CD4-positive, alpha-beta memory T cell (primary cell): ENCODE measurements at regions of chr21 and their contacts with region 1.

Region 1: DNA sequence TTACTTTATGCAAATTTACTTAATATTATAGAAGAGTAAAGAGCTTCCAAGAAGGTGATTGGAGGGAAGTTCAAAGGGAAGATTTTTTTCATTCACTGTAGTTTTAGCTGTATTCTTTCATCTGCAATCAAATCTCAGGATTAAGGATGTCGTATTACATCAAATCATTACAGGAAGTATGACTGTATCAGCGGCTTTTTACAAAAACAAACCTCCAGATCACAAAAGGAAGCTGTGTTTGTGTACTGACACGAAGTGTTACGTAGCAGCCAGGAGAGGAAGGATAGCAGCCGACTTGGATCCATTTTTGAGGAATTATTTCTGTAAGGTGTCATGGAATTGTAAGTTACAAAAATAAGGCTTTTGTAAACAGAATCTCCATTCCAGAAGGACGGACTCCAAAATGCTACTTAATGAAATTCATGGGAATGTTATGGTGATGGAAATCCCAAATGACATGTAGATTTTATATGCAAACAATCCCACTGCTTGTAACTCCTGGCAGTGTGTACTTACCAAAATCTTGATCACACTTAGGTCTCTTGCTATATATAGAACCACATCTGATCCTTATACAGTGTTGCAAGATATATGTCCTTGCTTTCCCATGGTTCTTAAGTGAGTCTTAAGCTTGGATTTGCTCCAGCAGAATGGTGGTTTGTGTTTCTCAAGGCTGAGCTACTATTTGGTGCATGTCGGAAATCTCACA is 49.8 kb downstream of the KCNJ15 start:
- DNase-seq: peak; percentile 27 to 65 (median 45)
- H3K4me3 ChIP-seq: no peak overlapping the region
- H3K4me3 Mint-ChIP-seq: peak overlapping the region in 3 of 8 donors; percentile 15 to 64 (median 48)
- H3K27ac ChIP-seq: no peak overlapping the region
- H3K27ac Mint-ChIP-seq: peak overlapping the region in 6 of 7 donors; percentile 34 to 89 (median 80)
- H3K4me1 ChIP-seq: peaks cover 5% of the 10 kb centered on the region
- H3K4me1 Mint-ChIP-seq: peaks cover 3 to 17% (median 8%) of the 10 kb centered on the region in 4 donors
- H3K27me3 ChIP-seq: no peaks in the 10 kb centered on the region
- H3K27me3 Mint-ChIP-seq: no peaks in the 10 kb centered on the region

Region 2: GRCh38 chr21:38323721-38324531 is 17.3 kb after region 1 on chr21:
- CTCF ChIA-PET with region 1: no interaction called
- POLR2A ChIA-PET with region 1: interaction called, 12 read pairs
- intact Hi-C with region 1: no loop called
- DNase-seq: peak in 4 of 5 donors; percentile 23 to 48 (median 36)
- H3K4me3 ChIP-seq: no peak overlapping the region
- H3K4me3 Mint-ChIP-seq: peak overlapping the region in 7 of 8 donors; percentile 1 to 55 (median 17)
- H3K27ac ChIP-seq: no peak overlapping the region
- H3K27ac Mint-ChIP-seq: peak overlapping the region; percentile 9 to 90 (median 69)
- H3K4me1 ChIP-seq: peaks cover 22% of the 10 kb centered on the region
- H3K4me1 Mint-ChIP-seq: peaks cover 12 to 16% (median 14%) of the 10 kb centered on the region in 4 donors
- H3K27me3 ChIP-seq: no peaks in the 10 kb centered on the region
- H3K27me3 Mint-ChIP-seq: peaks cover 0 to 2% of the 10 kb centered on the region in 2 donors

Region 3: DNA sequence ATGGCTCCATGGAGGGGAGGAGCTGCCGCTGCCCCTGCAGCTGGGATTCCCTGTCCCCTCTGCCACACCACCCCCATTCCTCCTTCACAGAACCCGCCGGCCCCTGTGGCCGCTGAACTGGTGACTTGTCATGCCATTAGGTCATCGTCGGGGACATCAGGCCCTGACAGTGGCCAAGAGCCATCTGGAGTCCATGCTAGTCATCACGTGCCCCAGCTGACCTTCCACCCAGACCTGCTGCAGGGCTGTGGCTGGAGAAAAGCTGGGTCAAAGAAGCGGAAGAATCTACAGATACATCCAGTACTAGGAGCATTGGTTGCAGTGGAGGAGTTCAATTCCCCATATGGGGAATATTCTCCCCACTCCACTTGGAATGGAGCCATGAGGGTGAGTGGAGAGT is 28.3 kb after region 1 on chr21:
- CTCF ChIA-PET with region 1: no interaction called
- POLR2A ChIA-PET with region 1: no interaction called
- intact Hi-C with region 1: no loop called
- DNase-seq: no peak
- H3K4me3 ChIP-seq: no peak overlapping the region
- H3K4me3 Mint-ChIP-seq: no peak overlapping the region
- H3K27ac ChIP-seq: no peak overlapping the region
- H3K27ac Mint-ChIP-seq: no peak overlapping the region
- H3K4me1 ChIP-seq: no peaks in the 10 kb centered on the region
- H3K4me1 Mint-ChIP-seq: no peaks in the 10 kb centered on the region
- H3K27me3 ChIP-seq: no peaks in the 10 kb centered on the region
- H3K27me3 Mint-ChIP-seq: no peaks in the 10 kb centered on the region

Region 4: GRCh38 chr21:38363693-38364092 is 57.1 kb after region 1 on chr21:
- CTCF ChIA-PET with region 1: no interaction called
- POLR2A ChIA-PET with region 1: no interaction called
- intact Hi-C with region 1: no loop called
- DNase-seq: no peak
- H3K4me3 ChIP-seq: no peak overlapping the region
- H3K4me3 Mint-ChIP-seq: no peak overlapping the region
- H3K27ac ChIP-seq: no peak overlapping the region
- H3K27ac Mint-ChIP-seq: no peak overlapping the region
- H3K4me1 ChIP-seq: no peaks in the 10 kb centered on the region
- H3K4me1 Mint-ChIP-seq: no peaks in the 10 kb centered on the region
- H3K27me3 ChIP-seq: no peaks in the 10 kb centered on the region
- H3K27me3 Mint-ChIP-seq: peaks cover 4 to 6% of the 10 kb centered on the region in 2 donors